Heart left ventricle (tissue), 16 donors: ENCODE measurements at regions of chr14 and their contacts with region 1.

Region 1: DNA sequence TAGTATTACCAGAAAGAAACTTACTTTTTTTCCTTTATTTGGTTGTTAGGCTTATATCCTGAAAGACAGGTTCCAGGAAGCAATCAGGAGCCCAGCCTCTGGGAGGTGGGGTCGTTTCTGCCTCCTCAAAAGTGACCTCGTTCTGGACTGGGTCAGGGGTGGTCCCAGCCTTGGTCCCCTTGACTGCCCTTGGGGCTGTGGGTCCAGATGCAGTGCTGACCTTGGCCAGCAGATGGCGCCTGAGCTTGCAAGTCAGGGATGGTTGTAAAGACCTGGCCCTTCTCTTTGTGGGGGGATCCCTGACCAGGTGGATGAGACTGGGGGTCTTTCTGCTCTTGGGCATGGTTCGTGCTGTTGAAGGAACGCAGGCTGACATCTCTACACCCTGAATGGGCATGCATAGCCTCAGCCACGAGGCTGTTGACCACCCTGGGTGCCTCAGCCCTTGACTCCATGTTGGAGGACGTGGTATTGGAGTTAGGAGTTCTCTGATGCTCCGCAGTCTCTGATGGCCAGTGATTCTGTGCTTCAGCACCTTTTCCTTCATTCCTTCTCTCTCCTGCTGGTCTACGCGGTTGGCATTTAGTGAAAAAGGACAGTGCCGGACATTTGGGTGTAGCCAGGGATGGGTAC is 62.4 kb downstream of the ADCK1 start:
- DNase-seq: peak; percentile 65 to 89 (median 72)
- ATAC-seq: peak; percentile 64 to 77 (median 74)
- H3K4me3 ChIP-seq: no peak overlapping the region
- H3K27ac ChIP-seq: no peak overlapping the region
- H3K4me1 ChIP-seq: peaks cover 0 to 15% (median 0%) of the 10 kb centered on the region in 12 donors
- H3K27me3 ChIP-seq: no peaks in the 10 kb centered on the region
- CTCF ChIP-seq: peak; percentile 93 to 98 (median 96)
- POLR2A ChIP-seq: no peak

Region 2: DNA sequence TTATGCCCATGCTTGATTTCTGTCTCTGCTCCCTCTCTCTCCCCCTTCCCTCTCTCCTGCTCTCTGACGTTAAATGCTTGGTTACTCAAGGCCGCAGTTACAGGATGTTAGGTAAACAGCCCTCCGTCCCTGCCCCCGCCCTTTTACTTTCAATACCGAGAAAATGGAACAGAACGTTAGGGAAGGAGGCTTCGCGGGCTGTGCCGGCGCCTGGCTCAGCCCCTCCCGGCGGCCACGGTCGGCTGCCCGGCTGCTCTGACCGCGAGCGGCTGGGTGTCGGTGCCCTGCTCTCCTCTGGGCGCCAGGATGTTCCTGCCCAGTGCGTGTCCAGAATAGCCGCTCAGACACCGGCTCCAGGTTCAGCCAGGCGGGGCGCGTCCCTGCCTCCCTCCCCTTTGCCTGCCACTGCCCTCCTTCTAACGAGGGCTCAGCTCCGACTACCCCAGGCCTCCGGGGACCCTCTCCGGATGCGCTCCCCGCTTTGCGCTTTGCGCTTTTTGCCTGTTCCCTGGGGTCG is 103.7 kb after region 1 on chr14:
- intact Hi-C with region 1: loop called in 2 of 10 experiments (anchors 10 kb)
- DNase-seq: no peak
- ATAC-seq: peak in 3 of 4 donors; percentile 52 to 78 (median 71)
- H3K4me3 ChIP-seq: peak overlapping the region in 10 of 12 donors; percentile 27 to 51 (median 43)
- H3K27ac ChIP-seq: no peak overlapping the region
- H3K4me1 ChIP-seq: peaks cover 0 to 8% (median 0%) of the 10 kb centered on the region in 12 donors
- H3K27me3 ChIP-seq: peaks cover 0 to 30% (median 15%) of the 10 kb centered on the region in 9 donors
- CTCF ChIP-seq: no peak
- POLR2A ChIP-seq: no peak

Region 3: DNA sequence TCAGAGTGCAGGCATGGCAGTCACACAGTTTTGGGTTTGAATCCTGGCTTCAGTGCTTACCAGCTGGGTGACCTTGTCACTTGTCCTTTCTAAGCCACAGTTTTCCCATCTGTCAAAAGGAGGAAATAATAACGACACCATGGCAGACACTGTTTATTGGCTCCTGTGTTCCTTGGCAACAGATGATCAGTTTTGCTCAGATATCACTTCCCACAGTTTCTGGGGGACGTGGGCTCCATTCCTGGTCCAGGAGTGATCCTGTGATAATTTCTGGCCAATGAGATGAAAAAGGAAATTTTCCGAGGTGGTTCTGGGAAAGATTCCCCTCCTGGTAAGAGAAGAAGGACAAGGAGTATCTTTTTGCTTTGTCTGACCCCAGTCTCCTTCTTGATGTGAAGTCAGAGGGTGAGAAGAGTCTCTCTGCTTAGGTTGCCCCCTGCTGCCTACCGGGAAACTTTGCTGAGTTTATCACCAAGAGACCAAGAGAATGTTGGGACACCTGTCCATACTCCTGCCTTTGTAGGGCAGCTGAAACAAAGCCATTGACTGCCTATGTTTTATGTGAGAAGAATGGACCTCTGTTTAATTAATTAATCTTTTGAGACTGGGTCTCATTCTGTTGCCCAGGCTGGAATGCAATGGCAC is 129.0 kb after region 1 on chr14:
- intact Hi-C with region 1: loop called in 2 of 10 experiments (anchors 10 kb)
- DNase-seq: no peak
- ATAC-seq: no peak
- H3K4me3 ChIP-seq: no peak overlapping the region
- H3K27ac ChIP-seq: no peak overlapping the region
- H3K4me1 ChIP-seq: peaks cover 0 to 10% (median 0%) of the 10 kb centered on the region in 12 donors
- H3K27me3 ChIP-seq: no peaks in the 10 kb centered on the region
- CTCF ChIP-seq: peak in 3 of 12 donors; percentile 10 to 25 (median 13)
- POLR2A ChIP-seq: no peak

Region 4: DNA sequence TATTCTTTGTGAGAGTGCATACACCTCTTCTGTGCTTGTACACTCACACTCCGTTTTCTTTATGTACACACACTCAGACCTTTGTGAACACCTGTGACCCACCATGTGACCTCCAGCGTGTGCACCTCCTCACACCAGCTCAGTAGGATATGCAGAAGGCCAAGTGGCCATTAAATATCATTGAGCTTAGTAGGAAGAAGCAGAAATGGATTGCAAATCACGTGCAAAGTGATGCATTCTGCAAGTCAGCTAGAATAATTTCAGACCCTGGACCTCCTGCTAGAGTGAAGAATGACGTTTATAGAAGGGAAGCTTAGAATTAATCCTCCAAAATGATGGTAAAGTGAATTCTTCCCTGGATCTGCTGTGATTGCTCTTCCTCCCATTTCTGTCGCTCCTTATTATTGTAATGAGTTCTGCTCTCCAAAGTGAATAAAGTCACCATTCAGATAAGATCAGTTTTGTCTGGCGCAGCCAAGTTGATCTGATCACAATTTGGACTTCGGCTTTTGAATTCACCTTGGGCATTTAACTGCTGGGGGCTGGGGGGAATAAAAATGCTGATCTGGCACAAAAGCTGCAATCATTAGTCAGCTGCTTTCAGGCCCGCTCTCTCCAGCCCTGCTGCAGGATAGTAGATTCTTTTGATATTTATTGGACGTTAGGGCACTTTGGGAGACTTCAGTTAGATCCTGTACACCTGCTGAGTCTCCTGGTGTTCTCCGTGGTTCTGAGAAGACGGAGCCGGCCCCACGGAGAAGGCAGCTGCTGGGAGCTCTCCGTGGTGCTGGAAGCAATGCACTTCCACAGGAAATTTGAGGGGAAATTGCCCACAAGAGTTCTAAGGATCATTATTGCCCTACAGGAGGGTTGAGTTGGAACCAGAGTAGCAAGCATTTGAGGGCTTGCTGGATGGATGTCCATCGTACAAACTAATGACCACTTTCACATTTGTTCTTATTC is 295.5 kb after region 1 on chr14:
- intact Hi-C with region 1: loop called in 3 of 10 experiments (anchors 10 kb)
- DNase-seq: peak in 1 of 5 donors; percentile 32
- ATAC-seq: peak in 1 of 4 donors; percentile 59
- H3K4me3 ChIP-seq: no peak overlapping the region
- H3K27ac ChIP-seq: no peak overlapping the region
- H3K4me1 ChIP-seq: no peaks in the 10 kb centered on the region
- H3K27me3 ChIP-seq: peaks cover 0 to 7% (median 0%) of the 10 kb centered on the region in 9 donors
- CTCF ChIP-seq: no peak
- POLR2A ChIP-seq: no peak

Region 5: DNA sequence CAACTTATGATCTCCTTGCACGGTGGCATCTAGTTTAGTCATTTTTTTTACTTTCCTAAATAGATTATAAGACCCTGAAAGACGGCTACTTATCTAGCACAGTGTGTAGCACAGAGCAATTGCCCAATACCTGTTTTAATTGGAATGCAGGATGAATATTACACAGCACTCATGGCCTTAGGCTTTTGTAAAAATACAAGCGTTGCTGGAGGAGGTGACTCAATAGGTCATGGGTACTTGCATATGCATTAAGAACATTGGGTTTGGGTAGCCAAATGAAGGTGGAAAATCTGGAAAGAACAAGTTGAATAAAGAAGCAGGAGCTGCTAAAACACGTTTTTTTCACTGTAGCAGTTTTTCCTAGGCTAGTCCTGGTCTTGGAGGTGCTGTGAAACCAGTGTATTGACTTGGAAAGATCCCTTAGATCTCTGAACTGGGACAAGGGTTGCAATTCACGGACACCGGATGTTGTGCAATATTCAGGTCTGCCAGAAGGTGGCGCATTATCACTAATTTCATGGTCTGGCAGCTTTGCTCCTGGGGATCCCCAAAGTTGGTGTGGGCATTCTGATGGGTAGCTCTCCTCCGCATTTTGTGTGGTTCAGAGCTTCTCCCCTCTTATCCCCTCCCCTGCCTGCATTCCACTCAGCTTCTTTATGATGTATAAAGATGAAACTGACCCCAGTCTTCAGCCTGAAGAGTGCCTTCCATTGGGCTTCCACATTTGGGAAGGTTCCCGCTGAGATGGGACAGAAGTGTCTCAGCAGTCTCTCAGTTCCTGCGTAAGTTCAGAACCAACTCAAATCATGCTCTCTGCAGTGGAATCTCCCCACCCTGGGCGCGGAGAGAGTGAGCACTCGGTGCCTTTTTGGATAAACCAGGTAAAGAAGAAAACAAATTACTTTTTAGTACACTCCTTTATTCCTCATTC is 586.2 kb after region 1 on chr14:
- intact Hi-C with region 1: no loop called
- DNase-seq: peak in 3 of 5 donors; percentile 16 to 22 (median 18)
- ATAC-seq: no peak
- H3K4me3 ChIP-seq: no peak overlapping the region
- H3K27ac ChIP-seq: no peak overlapping the region
- H3K4me1 ChIP-seq: peaks cover 0 to 7% (median 0%) of the 10 kb centered on the region in 12 donors
- H3K27me3 ChIP-seq: no peaks in the 10 kb centered on the region
- CTCF ChIP-seq: peak; percentile 36 to 65 (median 55)
- POLR2A ChIP-seq: no peak

Region 6: GRCh38 chr14:78598041-78598920 is 736.0 kb after region 1 on chr14:
- intact Hi-C with region 1: loop called in 6 of 10 experiments (anchors 5 to 10 kb)
- DNase-seq: peak in 4 of 5 donors; percentile 24 to 42 (median 34)
- ATAC-seq: peak; percentile 51 to 89 (median 87)
- H3K4me3 ChIP-seq: no peak overlapping the region
- H3K27ac ChIP-seq: no peak overlapping the region
- H3K4me1 ChIP-seq: peaks cover 0 to 4% (median 0%) of the 10 kb centered on the region in 12 donors
- H3K27me3 ChIP-seq: no peaks in the 10 kb centered on the region
- CTCF ChIP-seq: peak; percentile 73 to 92 (median 84)
- POLR2A ChIP-seq: no peak